ENCODE measurements at regions of chr11 and their contacts with region 1.

Region 1: DNA sequence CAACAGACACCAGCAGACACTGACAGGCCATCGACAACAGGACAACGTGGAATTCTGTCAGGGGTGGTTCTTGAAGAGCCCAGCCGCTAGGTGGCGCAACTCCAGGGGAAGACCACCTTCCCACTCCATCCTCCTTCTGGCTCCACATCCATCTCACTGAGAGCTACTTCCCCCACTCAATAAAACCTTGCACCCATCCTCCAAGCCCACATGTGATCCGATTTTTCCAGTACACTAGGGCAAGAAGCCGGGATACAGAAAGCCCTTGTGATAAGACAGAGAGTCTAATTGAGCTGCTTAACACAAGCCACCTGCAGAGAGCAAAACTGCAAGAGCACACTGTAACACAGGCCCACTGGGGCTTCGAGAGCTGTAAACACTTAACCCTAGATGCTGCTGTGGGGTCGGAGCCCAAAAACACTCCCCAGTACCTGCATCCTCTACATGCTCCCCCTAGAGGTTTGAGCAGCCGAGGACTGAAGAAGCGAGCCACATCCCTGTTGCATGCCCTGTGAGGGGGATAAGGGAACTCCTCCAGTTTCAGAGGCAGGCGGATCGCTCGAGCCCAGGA is 11.5 kb upstream of the RAB39A start:
- DNase-seq: peak; percentile 44
- CTCF ChIP-seq: peak; percentile 78

Region 2: GRCh38 chr11:107606141-107606540 is 310.6 kb before region 1 on chr11:
- CTCF ChIA-PET with region 1: no interaction called
- POLR2A ChIA-PET with region 1: no interaction called
- DNase-seq: no peak
- CTCF ChIP-seq: no peak

Region 3: DNA sequence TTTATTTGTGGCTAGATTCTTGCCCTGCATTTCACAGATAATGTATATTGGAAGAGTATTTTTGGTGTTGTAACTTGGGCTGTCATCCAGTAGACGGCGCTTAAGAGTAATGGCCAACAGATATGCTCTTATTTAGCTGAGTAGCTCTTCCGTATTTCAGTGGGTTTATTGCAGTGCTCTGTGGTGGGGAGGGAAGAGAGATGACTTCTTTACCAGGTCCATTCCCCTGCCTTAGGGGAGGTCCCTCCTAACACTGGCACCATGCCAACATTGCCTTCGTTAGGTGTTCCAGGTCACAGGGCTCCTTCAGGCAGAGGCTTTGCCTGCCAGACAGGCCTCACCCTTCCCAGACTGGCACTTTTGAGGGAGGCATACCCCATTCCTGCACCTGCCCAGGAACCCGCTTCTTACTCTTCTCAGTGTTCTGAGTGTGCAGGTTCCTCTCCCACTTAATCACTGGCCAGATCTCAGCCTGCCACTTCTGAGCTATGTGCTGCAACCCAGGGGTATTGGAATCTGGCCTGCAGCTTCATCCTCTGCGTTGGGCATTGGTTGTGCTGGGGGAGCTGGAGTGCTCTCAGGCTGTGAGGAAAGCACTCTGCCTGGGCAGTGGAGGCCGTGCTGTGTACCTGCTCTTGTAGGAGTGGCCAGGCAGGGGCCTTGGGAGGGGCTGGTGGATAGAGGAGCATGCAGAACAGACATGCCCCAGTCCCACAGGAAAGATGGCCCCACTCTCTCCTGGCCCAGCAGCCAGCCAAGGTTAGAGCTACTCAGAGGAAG is 175.5 kb before region 1 on chr11:
- CTCF ChIA-PET with region 1: no interaction called
- POLR2A ChIA-PET with region 1: no interaction called
- DNase-seq: peak; percentile 61
- CTCF ChIP-seq: peak; percentile 74

Region 4: GRCh38 chr11:107898270-107898669 is 18.5 kb before region 1 on chr11:
- CTCF ChIA-PET with region 1: interaction called, 28 read pairs
- POLR2A ChIA-PET with region 1: no interaction called
- DNase-seq: peak; percentile 43
- CTCF ChIP-seq: peak; percentile 71

Region 5: DNA sequence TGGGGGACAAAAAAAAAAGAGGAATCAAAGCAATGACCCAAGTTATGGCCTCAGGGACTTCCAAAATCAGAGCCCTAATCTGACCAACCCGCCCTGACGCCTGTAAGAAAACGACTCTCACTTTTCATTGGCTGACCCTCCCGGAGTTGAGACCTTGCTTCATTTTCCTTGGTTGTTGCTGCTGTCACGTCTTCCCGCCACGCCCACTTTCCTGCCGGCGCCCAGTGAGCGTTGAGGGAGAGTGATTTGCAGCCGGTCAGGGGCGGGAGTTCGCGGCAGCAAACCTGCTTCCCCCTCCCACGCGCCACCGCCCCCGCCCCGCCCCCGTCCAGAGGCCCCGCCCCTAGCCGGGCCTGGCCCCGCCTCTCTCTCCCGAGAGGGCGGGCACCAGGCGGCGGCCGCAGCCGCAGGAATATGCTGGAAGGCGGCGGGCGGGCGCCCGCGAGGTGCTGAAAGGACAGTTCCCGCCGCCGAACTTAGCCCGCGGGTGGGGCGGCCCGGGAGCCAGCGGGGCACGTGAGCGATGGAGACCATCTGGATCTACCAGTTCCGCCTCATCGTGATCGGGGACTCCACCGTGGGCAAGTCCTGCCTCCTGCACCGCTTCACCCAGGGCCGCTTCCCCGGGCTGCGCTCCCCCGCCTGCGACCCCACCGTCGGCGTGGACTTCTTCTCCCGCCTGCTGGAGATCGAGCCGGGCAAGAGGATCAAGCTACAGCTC is 11.4 kb after region 1 on chr11 and contains the start of gene RAB39A:
- CTCF ChIA-PET with region 1: interaction called, 24 read pairs
- POLR2A ChIA-PET with region 1: no interaction called
- DNase-seq: peak; percentile 98
- CTCF ChIP-seq: no peak

Region 6: DNA sequence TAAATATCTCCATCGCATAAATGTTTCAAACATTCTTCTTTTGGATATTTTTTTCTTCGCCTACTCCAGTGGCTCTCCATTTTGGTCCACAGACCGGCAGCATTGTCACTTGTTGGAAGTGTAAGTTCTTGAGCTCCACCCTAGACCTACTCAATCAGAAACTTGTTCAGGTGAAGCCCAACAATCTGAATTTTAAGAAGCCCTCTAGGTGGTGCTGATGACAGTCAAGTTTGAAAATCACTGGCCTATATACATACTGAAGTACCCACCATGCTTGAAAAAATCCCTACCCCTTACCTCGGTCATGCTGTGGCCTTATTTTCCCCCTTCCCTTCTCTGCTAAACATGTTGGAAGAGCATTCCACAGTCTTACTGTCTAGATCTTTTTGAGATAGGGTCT is 194.4 kb after region 1 on chr11:
- CTCF ChIA-PET with region 1: no interaction called
- POLR2A ChIA-PET with region 1: no interaction called
- DNase-seq: no peak
- CTCF ChIP-seq: no peak

Measured in GM10248 (cell line).